Dorsolateral prefrontal cortex (tissue), 120 donors: ENCODE measurements at regions of chr5 and their contacts with region 1.

Region 1: GRCh38 chr5:115169487-115170133 is at the start of gene TRIM36:
- DNase-seq: peak; percentile 62 to 96 (median 89)
- H3K4me3 ChIP-seq: peak within 1 kb of the TSS; percentile 53 to 99 (median 83)
- H3K27ac ChIP-seq: peak within 1 kb of the TSS in 54 of 59 donors; percentile 1 to 84 (median 66)
- H3K27me3 ChIP-seq: peaks cover 0 to 21% (median 0%) of the 10 kb centered on the region in 45 donors
- CTCF ChIP-seq: peak in 15 of 56 donors; percentile 5 to 35 (median 21)
- total RNA-seq, gene TRIM36: 16.6 to 66.6 (median 40.9) TPM

Region 2: DNA sequence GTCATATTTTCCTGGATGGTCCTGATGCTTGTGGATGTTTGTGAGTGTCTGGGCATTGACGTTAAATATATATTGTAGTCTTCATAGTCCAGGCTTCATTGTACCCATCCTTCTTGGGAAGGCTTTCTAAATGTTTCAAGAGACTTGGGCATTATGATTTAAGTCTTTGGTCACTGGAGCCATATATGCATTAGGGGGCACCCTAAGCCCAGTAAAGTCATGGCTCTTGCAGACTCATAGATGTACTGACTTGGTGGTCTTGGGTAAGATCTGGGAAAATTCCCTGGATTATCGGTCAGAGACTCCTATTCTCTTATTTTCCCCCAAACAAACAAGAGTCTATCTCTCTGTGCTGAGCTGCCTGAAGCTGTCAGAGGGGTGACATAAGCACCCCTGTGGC is 271.0 kb before region 1 on chr5:
- intact Hi-C with region 1: no loop called
- DNase-seq: no peak
- H3K4me3 ChIP-seq: no peak overlapping the region
- H3K27ac ChIP-seq: no peak overlapping the region
- H3K27me3 ChIP-seq: no peaks in the 10 kb centered on the region
- CTCF ChIP-seq: peak in 6 of 56 donors; percentile 8 to 33 (median 19)

Region 3: GRCh38 chr5:115079924-115080623 is 89.5 kb before region 1 on chr5:
- intact Hi-C with region 1: no loop called
- DNase-seq: no peak
- H3K4me3 ChIP-seq: no peak overlapping the region
- H3K27ac ChIP-seq: no peak overlapping the region
- H3K27me3 ChIP-seq: peaks cover 0 to 4% (median 0%) of the 10 kb centered on the region in 45 donors
- CTCF ChIP-seq: no peak

Region 4: DNA sequence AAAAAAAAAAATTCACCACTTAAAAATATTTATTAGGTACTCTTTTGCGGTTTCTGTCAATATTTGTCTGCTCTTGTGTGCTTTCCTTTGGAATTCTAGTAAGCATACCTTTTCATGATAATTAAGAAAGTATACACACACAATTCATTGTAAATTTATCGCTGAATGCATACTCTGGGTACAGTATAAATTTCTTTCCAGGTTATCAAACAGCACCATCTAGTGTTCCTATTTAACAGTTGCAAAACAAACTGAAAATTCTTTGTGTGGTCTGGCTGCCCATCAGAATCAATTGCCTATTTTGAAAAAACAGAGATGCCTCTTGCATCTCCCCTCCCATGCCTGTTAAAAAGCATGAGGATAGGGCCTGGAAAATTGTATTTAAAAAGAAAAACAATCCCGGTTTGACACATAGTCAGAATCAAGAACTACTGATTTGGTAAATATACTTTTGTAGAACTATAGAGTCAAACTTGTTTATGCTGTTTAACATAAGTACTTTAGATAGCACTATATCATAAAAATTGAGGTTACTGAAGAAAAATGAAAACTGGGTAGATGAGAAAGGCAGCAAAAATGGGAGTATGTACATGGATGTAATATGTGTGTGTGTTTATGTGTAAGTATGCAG is 76.9 kb after region 1 on chr5:
- intact Hi-C with region 1: loop called in 1 of 2 experiments (anchors 10 kb)
- DNase-seq: no peak
- H3K4me3 ChIP-seq: no peak overlapping the region
- H3K27ac ChIP-seq: no peak overlapping the region
- H3K27me3 ChIP-seq: no peaks in the 10 kb centered on the region
- CTCF ChIP-seq: peak; percentile 54 to 90 (median 78)

Region 5: GRCh38 chr5:115415143-115415491 is 245.5 kb after region 1 on chr5:
- intact Hi-C with region 1: no loop called
- DNase-seq: peak in 4 of 10 donors; percentile 10 to 44 (median 36)
- H3K4me3 ChIP-seq: no peak overlapping the region
- H3K27ac ChIP-seq: peak overlapping the region in 49 of 59 donors; percentile 4 to 85 (median 59)
- H3K27me3 ChIP-seq: no peaks in the 10 kb centered on the region
- CTCF ChIP-seq: no peak